ENCODE measurements at regions of chr2 and their contacts with region 1.

Region 1: GRCh38 chr2:107811411-107811810 is 15.3 kb upstream of the RGPD4 start:
- DNase-seq: no peak
- H3K4me3 ChIP-seq: no peak overlapping the region
- H3K27ac ChIP-seq: no peak overlapping the region
- H3K4me1 ChIP-seq: no peaks in the 10 kb centered on the region
- H3K27me3 ChIP-seq: no peaks in the 10 kb centered on the region
- CTCF ChIP-seq: no peak

Region 2: GRCh38 chr2:106362789-106363188 is 1448.6 kb before region 1 on chr2:
- CTCF ChIA-PET with region 1: no interaction called
- POLR2A ChIA-PET with region 1: interaction called, 10 read pairs
- intact Hi-C with region 1: no loop called
- DNase-seq: no peak
- H3K4me3 ChIP-seq: no peak overlapping the region
- H3K27ac ChIP-seq: no peak overlapping the region
- H3K4me1 ChIP-seq: no peaks in the 10 kb centered on the region
- H3K27me3 ChIP-seq: no peaks in the 10 kb centered on the region
- CTCF ChIP-seq: no peak

Region 3: DNA sequence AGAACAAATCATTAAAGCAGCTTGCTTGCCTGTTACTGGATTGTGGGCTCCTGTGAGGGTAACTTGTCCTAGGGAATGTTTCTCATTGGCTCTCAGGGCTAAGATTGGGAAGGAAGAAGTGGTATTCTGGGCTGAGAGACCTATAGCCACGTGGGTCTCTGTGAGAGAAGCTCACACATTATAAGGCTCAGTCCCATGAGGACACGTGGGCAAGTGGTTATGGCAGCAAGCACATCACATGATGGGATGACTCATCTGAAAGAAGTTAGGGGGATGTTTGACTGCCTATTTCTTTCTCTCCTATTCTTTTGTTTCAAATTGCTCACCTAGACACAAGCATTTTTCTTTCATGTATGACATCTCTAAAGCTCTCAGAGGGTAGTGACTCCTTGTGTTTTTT is 507.4 kb before region 1 on chr2:
- CTCF ChIA-PET with region 1: no interaction called
- POLR2A ChIA-PET with region 1: no interaction called
- intact Hi-C with region 1: no loop called
- DNase-seq: no peak
- H3K4me3 ChIP-seq: no peak overlapping the region
- H3K27ac ChIP-seq: no peak overlapping the region
- H3K4me1 ChIP-seq: no peaks in the 10 kb centered on the region
- H3K27me3 ChIP-seq: no peaks in the 10 kb centered on the region
- CTCF ChIP-seq: no peak

Region 4: DNA sequence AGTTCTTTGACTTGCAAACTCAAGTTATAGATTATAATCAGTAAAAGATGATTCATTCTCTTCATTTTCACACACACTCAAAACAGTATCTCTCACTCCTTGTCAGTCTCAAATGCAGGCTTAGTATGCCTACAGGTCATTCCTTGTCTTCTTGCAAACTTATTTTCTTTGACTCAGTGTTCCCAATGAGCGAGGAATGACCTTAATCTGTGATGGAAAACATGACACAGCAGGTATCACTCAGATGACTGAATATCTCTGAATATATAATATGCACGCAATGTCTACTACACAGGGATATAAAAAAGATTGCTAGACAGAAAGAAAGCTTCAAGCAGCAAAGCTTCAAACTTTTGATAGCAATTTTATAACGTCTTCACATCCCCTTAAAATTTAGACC is 112.5 kb before region 1 on chr2:
- CTCF ChIA-PET with region 1: no interaction called
- POLR2A ChIA-PET with region 1: no interaction called
- intact Hi-C with region 1: no loop called
- DNase-seq: no peak
- H3K4me3 ChIP-seq: no peak overlapping the region
- H3K27ac ChIP-seq: no peak overlapping the region
- H3K4me1 ChIP-seq: no peaks in the 10 kb centered on the region
- H3K27me3 ChIP-seq: no peaks in the 10 kb centered on the region
- CTCF ChIP-seq: no peak